Heart right ventricle (tissue), 16 donors: ENCODE measurements at regions of chr6 and their contacts with region 1.

Region 1: GRCh38 chr6:7292596-7293255 is 20.3 kb downstream of the SSR1 start:
- DNase-seq: no peak
- ATAC-seq: peak in 4 of 8 donors; percentile 48 to 91 (median 64)
- H3K4me3 ChIP-seq: no peak overlapping the region
- H3K27ac ChIP-seq: peak overlapping the region in 6 of 10 donors; percentile 28 to 53 (median 42)
- H3K4me1 ChIP-seq: peaks cover 0 to 11% (median 0%) of the 10 kb centered on the region in 9 donors
- H3K27me3 ChIP-seq: no peaks in the 10 kb centered on the region
- CTCF ChIP-seq: no peak

Region 2: DNA sequence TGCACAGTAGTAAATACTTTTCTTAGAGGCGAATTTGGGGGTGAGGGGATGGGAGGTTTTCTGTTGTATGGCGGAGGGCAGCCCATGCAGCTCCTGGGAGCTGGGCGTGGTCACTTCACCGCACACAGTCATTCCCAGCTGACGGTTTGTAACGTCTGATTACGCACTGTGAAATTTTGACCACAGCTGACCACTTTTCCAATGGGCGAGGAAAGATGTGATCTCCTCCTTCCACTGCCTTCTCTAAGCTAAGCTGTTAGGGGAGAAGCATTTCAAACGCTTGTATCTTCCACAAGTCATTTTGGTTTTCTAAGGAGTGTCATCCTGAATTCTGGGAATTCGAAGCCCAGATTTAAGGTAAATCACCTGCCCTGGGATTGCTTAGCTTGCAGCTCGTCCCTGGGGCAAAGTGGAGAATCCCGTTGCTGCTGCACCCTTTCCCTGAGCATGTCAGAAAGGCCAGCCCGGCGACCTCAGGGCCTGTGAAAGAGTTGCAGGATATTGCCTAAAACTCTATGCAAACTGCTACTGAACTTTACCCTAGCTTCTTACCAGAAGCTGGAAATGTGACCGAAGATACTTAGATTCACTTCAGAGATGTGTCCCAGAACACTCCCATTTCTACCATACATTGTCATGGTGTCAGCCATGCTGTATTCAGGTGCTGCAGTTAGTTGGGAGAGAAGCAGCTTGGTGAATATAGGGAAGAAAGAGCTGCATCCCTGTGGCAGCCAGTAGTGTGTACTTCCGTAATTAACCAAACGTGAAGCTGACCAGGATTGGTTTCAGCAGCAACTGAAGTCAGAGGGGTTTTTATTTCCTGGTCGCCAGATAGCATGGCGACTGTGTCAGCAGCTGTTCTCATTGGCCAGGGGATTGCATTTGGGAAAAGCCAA is 126.1 kb before region 1 on chr6:
- intact Hi-C with region 1: no loop called
- DNase-seq: no peak
- ATAC-seq: peak in 1 of 8 donors; percentile 9
- H3K4me3 ChIP-seq: no peak overlapping the region
- H3K27ac ChIP-seq: peak overlapping the region in 4 of 10 donors; percentile 23 to 78 (median 44)
- H3K4me1 ChIP-seq: peaks cover 25 to 99% (median 86%) of the 10 kb centered on the region in 9 donors
- H3K27me3 ChIP-seq: no peaks in the 10 kb centered on the region
- CTCF ChIP-seq: no peak

Region 3: GRCh38 chr6:7401075-7401474 is 108.3 kb after region 1 on chr6:
- intact Hi-C with region 1: loop called in 1 of 10 experiments (anchors 10 kb)
- DNase-seq: no peak
- ATAC-seq: no peak
- H3K4me3 ChIP-seq: no peak overlapping the region
- H3K27ac ChIP-seq: no peak overlapping the region
- H3K4me1 ChIP-seq: peaks cover 0 to 3% (median 0%) of the 10 kb centered on the region in 9 donors
- H3K27me3 ChIP-seq: no peaks in the 10 kb centered on the region
- CTCF ChIP-seq: no peak

Region 4: DNA sequence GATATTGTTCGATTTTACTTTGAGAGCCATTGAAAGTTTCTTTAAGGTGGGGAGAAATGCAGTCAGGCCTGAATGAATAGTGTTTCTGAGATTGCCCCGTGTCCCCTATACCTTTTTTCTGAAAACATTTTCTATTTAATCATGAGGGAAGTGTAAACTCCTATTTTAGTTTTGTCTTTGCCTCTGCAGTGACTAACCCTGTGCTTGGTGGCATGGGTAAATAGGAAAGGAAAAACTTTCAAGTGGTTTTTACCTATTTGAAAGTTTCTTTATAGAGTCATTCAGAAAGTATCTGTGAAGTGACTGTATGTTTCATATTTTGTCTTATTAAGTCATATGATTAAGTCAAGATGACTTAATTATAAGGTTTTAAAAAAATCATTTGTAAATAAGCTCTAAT is 311.8 kb after region 1 on chr6:
- intact Hi-C with region 1: loop called in 1 of 10 experiments (anchors 5 kb)
- DNase-seq: no peak
- ATAC-seq: no peak
- H3K4me3 ChIP-seq: no peak overlapping the region
- H3K27ac ChIP-seq: peak overlapping the region in 4 of 10 donors; percentile 2 to 18 (median 17)
- H3K4me1 ChIP-seq: peaks cover 0 to 13% (median 0%) of the 10 kb centered on the region in 9 donors
- H3K27me3 ChIP-seq: no peaks in the 10 kb centered on the region
- CTCF ChIP-seq: no peak

Region 5: DNA sequence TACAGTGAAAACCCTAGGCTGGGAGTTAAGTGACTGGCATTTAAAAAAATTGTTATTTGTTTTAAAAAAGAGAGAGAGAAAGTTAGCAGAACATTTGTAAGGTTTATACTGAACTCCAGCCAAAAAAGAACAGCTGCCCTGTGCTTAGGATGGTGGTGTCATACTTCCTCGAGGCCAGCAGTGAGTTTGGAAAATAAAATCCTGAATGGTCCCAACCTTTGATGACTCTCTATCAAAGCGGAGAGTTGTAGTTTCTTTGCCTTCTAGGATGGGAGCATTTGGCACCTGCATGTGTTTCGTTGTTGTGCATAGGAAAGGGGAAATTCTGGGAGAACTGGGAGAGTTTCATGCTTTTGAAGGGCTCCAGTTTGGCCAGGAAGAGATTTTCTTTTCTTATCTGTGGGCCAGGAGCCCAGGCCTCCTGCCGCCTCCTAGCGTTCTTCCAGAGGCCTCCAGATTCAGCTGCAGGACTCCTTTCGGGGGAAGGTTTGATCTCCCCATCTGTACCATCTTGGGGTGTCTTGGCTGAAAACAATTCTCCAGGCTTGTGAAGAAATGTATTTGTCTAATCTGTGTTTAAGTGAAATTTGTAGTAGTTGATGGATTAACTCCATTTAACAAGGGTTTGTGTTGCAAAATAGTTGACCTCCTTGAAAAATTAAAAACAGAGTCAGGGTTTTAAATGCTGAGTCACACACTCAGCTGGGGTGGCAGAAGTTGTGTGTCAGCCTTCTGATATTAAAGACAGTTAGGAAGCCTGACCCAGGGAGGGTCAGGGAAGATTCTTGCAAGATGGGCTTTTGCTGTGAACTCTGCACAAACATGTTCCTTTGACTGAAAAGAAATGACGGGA is 554.5 kb after region 1 on chr6:
- intact Hi-C with region 1: no loop called
- DNase-seq: no peak
- ATAC-seq: peak in 7 of 8 donors; percentile 55 to 79 (median 71)
- H3K4me3 ChIP-seq: no peak overlapping the region
- H3K27ac ChIP-seq: no peak overlapping the region
- H3K4me1 ChIP-seq: peaks cover 0 to 5% (median 0%) of the 10 kb centered on the region in 9 donors
- H3K27me3 ChIP-seq: peaks cover 0 to 4% (median 0%) of the 10 kb centered on the region in 7 donors
- CTCF ChIP-seq: peak in 4 of 9 donors; percentile 15 to 41 (median 26)